Posterior vena cava (tissue), 2 donors: ENCODE measurements at regions of chr18 and their contacts with region 1.

Region 1: GRCh38 chr18:57649556-57650500 is 28.2 kb upstream of the NARS1 start:
- DNase-seq: no peak

Region 2: GRCh38 chr18:57748770-57749603 is 99.2 kb after region 1 on chr18:
- intact Hi-C with region 1: loop called in 1 of 2 experiments (anchors 10 kb)
- DNase-seq: no peak